ENCODE measurements at regions of chr16 and their contacts with region 1.

Region 1: DNA sequence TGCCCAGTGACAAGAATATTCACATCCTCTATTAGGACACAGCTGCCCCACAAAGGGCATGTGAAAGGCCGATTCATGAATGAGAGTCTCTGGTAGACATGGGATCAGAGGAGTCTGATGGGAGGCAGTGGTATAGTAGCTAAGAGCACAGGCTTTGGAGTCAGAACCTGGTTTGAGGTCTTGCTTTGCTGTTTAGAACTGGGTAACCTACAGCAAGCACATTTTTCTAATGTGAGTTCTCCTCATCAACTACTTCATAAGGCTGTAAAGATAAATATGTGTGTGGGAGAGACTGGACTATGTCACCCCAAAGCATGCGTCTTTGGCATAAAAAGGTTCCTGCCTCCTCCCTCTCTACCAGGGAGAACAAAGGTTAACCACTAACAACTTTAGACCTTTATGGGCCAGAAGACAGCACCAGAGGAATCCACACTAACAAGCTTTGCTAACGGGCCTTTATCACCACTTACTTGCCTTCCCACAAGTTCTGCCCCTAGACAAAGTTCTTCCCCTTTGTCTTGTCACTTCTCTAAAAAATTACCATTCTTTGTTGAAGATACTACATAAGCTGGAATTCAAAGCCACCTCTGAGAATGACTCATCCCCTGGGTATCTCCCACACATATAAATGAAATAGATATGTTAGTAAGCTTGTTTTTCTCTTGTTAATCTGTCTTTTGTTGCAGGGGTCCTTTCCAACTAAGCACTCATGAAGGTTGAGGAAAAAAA is 21.1 kb downstream of the CDR2 start:
- DNase-seq: peak in 2 of 5 donors; percentile 9 to 29
- H3K4me3 ChIP-seq: no peak overlapping the region
- H3K4me3 Mint-ChIP-seq: peak overlapping the region in 4 of 7 donors; percentile 23 to 47 (median 38)
- H3K27ac ChIP-seq: no peak overlapping the region
- H3K27ac Mint-ChIP-seq: peak overlapping the region; percentile 46 to 86 (median 80)
- H3K4me1 ChIP-seq: peaks cover 53% of the 10 kb centered on the region
- H3K4me1 Mint-ChIP-seq: peaks cover 49 to 67% (median 66%) of the 10 kb centered on the region in 3 donors
- H3K27me3 ChIP-seq: no peaks in the 10 kb centered on the region
- H3K27me3 Mint-ChIP-seq: no peaks in the 10 kb centered on the region

Region 2: DNA sequence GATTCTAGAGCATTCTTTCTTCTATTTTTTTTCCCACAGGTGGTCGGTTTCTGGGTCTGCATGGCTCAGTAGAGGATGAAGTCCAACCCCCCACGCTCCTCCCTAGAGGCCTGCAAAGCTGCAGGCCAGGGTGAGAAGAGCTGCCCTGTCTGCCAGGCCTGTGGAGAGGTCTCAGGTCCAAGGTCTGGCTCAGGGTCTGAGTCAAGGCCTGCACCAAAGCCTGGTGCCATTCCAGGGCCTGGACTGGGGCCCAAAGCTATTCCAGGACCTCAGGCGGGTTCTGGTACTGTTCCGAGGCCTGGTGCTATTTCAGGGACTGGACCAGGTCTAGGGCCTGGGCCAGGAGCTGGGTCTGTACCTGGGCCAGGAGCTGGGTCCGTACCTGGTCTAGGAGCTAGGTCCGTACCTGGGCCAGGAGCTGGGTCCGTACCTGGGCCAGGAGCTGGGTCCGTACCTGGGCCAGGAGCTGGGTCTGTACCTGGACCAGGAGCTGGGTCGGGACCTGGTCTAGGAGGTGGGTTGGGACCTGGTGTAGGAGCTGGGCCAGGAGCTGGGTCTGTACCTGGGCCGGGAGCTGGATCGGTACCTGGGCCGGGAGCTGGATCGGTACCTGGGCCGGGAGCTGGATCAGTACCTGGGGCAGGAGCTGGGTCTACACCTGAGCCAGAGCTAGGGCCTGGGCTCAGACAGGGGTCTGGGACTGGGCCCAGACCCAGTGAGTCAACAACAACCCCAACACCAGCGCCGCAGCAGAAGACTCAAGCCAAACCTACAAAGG is 187.7 kb before region 1 on chr16:
- CTCF ChIA-PET with region 1: no interaction called
- POLR2A ChIA-PET with region 1: no interaction called
- DNase-seq: no peak
- H3K4me3 ChIP-seq: no peak overlapping the region
- H3K4me3 Mint-ChIP-seq: no peak overlapping the region
- H3K27ac ChIP-seq: no peak overlapping the region
- H3K27ac Mint-ChIP-seq: peak overlapping the region in 1 of 8 donors; percentile 47
- H3K4me1 ChIP-seq: no peaks in the 10 kb centered on the region
- H3K4me1 Mint-ChIP-seq: peaks cover 11 to 12% (median 11%) of the 10 kb centered on the region in 3 donors
- H3K27me3 ChIP-seq: peaks cover 13% of the 10 kb centered on the region
- H3K27me3 Mint-ChIP-seq: peaks cover 8 to 12% of the 10 kb centered on the region in 2 donors

Region 3: GRCh38 chr16:22369221-22369811 is 16.0 kb after region 1 on chr16:
- CTCF ChIA-PET with region 1: interaction called, 9 read pairs
- POLR2A ChIA-PET with region 1: interaction called, 45 read pairs
- DNase-seq: peak in 2 of 5 donors; percentile 28 to 34
- H3K4me3 ChIP-seq: peak overlapping the region; percentile 17
- H3K4me3 Mint-ChIP-seq: peak overlapping the region in 6 of 7 donors; percentile 3 to 63 (median 40)
- H3K27ac ChIP-seq: no peak overlapping the region
- H3K27ac Mint-ChIP-seq: peak overlapping the region; percentile 22 to 89 (median 78)
- H3K4me1 ChIP-seq: peaks cover 69% of the 10 kb centered on the region
- H3K4me1 Mint-ChIP-seq: peaks cover 76 to 89% (median 86%) of the 10 kb centered on the region in 3 donors
- H3K27me3 ChIP-seq: no peaks in the 10 kb centered on the region
- H3K27me3 Mint-ChIP-seq: no peaks in the 10 kb centered on the region

Region 4: GRCh38 chr16:22374311-22375116 is 21.2 kb after region 1 on chr16 and contains the start of gene CDR2:
- CTCF ChIA-PET with region 1: interaction called, 9 read pairs
- POLR2A ChIA-PET with region 1: interaction called, 45 read pairs
- DNase-seq: peak; percentile 98 to 99 (median 98)
- H3K4me3 ChIP-seq: peak within 1 kb of the TSS; percentile 81
- H3K4me3 Mint-ChIP-seq: peak within 1 kb of the TSS; percentile 88 to 97 (median 95)
- H3K27ac ChIP-seq: peak within 1 kb of the TSS; percentile 81
- H3K27ac Mint-ChIP-seq: peak within 1 kb of the TSS; percentile 75 to 99 (median 92)
- H3K4me1 ChIP-seq: peaks cover 38% of the 10 kb centered on the region
- H3K4me1 Mint-ChIP-seq: peaks cover 37 to 51% (median 49%) of the 10 kb centered on the region in 3 donors
- H3K27me3 ChIP-seq: no peaks in the 10 kb centered on the region
- H3K27me3 Mint-ChIP-seq: no peaks in the 10 kb centered on the region
- total RNA-seq, gene CDR2: 38.9 to 41.2 TPM